Right ventricle myocardium inferior (tissue), 1 donor: ENCODE measurements at regions of chr9 and their contacts with region 1.

Region 1: DNA sequence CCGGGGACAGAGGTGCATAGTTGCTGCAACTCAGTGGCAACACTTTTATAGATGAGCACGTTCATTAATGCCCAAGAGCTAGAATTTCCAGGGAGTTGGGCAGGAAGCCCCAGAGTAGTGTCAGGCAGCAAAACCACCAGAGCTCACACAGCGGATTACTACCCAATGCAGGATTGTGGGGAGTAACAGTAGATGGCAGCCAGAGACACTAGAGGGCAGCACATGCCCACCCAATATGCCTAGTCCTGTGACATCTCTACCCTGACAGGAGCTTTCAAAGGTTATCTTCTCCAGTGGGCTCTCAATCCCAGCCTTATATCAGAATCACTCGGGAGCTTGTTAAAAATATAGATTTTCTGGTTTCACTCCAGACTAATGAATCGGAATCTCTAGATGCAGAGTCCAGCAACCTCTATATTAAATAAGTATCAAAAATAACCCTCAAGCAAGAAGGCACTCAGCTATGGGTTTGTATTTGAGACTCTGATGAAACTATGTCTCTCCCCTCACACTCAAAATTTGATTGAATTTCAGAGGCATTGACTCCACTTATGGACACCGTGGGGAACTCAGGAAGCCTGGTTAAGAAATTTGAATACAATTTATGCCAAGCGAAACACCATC is 58.4 kb upstream of the PHF24 start:
- DNase-seq: peak; percentile 81
- ATAC-seq: peak; percentile 97

Region 2: GRCh38 chr9:34989003-34989945 is 89.6 kb after region 1 on chr9 and contains the start of gene DNAJB5:
- intact Hi-C with region 1: loop called (anchors 2 kb)
- DNase-seq: peak; percentile 99
- ATAC-seq: peak; percentile 89
- total RNA-seq, gene DNAJB5: 66.5 TPM

Region 3: GRCh38 chr9:35001803-35002502 is 102.3 kb after region 1 on chr9:
- intact Hi-C with region 1: no loop called
- DNase-seq: no peak
- ATAC-seq: no peak

Region 4: DNA sequence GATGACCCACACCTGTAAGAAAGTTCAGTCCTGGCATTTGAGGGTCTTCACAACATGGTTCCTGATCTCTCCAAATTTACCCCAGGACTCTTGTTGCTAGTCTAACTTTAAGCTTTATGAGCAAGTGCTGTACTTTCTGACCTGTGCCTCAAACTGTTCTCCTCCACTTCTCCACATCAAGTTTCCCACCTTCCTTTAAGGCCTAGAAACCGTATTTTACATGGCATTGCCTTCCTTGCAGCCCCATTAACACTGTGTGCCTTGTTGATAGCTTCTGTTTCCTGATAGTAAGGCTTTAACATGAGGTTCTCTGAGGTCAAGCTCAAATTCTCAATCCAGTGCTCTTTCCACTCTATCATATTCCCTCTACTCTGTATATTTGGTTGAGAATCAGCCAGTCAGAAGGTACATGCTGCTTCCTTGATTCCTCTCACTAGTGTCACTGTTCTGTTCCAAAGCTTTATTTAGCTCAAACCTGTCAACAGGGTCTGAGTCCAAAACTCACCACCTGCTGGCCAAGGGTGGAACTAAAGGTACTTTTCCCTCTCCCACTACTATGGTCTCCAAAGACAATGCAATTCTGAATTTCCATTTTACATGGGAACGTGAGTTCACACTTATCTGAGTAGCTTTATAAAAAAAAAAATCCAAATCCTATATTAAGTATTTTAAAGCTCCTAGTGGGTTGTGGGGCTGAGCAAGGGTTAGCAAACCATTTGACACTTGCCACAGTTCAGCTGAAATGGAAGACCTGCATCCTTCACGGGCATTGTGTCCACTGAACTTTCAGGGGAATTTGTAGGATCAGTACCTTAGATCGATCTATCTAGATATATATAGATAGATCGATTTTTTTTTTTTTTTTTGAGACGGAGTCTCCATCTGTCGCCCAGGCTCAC is 151.7 kb after region 1 on chr9:
- intact Hi-C with region 1: loop called (anchors 1 kb)
- DNase-seq: no peak
- ATAC-seq: peak; percentile 82

Region 5: DNA sequence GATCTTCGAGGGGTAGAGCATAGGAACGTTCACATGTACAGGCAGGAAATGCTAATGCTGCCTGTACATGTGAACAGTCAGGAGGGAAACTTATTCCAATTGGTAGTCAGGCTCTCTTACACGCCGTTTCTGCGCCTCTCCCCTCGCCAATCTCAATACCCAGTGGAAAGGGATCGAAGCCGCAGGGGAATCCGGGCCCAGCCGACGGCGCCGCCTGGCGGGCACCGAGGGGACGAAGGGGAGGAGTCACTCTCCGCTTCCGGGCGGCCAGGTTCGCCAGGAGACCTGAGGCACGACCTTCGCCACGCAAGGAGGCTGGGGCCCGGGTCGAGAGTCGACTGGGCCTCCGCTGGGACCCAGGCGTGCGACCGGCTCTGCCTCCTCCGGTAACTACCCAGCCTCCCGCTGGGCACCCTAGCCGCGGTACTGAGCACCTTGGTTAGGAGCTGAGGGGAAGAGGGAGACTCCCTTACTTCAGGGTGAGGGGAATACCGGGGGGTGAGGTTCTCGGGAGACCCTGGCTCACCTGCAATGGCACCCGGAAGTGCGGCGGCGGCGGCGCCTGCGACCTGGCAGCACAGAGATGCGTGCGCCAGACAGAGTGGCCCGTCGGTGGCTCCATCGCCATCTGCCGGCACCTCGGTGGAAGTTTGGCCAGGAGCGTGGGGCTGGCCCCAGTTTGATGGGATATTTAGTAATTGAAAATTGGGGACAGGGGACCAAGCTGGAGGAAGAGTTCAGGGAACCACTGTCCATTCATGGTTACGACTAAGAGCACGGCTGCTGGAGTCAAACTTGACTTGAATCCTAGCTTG is 196.6 kb after region 1 on chr9 and contains the start of gene PIGO:
- intact Hi-C with region 1: loop called (anchors 5 kb)
- DNase-seq: peak; percentile 96
- ATAC-seq: peak; percentile 93
- total RNA-seq, gene PIGO: 8.5 TPM